GM12878 (cell line): ENCODE measurements at regions of chr3 and their contacts with region 1.

Region 1: GRCh38 chr3:100068826-100069225 is 45.5 kb downstream of the FILIP1L start:
- DNase-seq: peak; percentile 33
- ATAC-seq: peak; percentile 96
- H3K4me3 ChIP-seq: no peak overlapping the region
- H3K27ac ChIP-seq: no peak overlapping the region
- H3K4me1 ChIP-seq: peaks cover 16% of the 10 kb centered on the region
- H3K27me3 ChIP-seq: no peaks in the 10 kb centered on the region
- CTCF ChIP-seq: peak; percentile 74 to 79 (median 79)
- EP300 ChIP-seq: no peak
- POLR2A ChIP-seq: no peak
- RAD21 ChIP-seq: peak; percentile 92

Region 2: GRCh38 chr3:100103558-100104441 is 35.0 kb after region 1 on chr3:
- CTCF ChIA-PET with region 1: interaction called, 11 read pairs
- POLR2A ChIA-PET with region 1: no interaction called
- RAD21 ChIA-PET with region 1: interaction called, 4 read pairs
- SMC1A ChIA-PET with region 1: interaction called, 9 read pairs
- in situ Hi-C with region 1: no loop called
- intact Hi-C with region 1: no loop called
- DNase-seq: peak; percentile 56
- ATAC-seq: peak; percentile 96
- H3K4me3 ChIP-seq: peak overlapping the region; percentile 11; the same call in 1 of the 2 replicates
- H3K27ac ChIP-seq: peak overlapping the region; percentile 75
- H3K4me1 ChIP-seq: peaks cover 33% of the 10 kb centered on the region
- H3K27me3 ChIP-seq: no peaks in the 10 kb centered on the region
- CTCF ChIP-seq: no peak
- EP300 ChIP-seq: peak; percentile 54 to 67; a peak in 3 of 4 replicates
- POLR2A ChIP-seq: no peak
- RAD21 ChIP-seq: peak; percentile 10; the same call in 1 of the 2 replicates

Region 3: DNA sequence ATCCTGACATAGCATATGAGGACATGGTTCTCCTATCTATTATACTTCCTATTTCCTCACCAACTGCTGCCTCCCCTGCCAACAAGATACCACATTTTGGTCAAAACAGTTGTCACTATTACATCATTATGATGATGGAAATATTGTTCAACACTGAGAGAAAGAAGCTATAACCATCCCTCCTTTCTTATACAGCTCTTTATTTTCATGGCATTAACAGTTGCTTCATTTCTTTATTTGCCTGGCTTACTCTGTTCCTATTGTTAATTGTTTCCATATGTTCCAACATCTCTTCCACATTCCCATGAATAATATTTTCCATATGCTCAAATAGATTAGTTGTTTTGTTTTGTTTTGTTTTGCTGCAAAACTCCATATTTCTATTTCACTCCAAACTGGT is 86.3 kb after region 1 on chr3:
- CTCF ChIA-PET with region 1: no interaction called
- POLR2A ChIA-PET with region 1: no interaction called
- RAD21 ChIA-PET with region 1: no interaction called
- SMC1A ChIA-PET with region 1: no interaction called
- in situ Hi-C with region 1: no loop called
- intact Hi-C with region 1: no loop called
- DNase-seq: no peak
- ATAC-seq: no peak
- H3K4me3 ChIP-seq: no peak overlapping the region
- H3K27ac ChIP-seq: no peak overlapping the region
- H3K4me1 ChIP-seq: no peaks in the 10 kb centered on the region
- H3K27me3 ChIP-seq: no peaks in the 10 kb centered on the region
- CTCF ChIP-seq: no peak
- EP300 ChIP-seq: no peak
- POLR2A ChIP-seq: no peak
- RAD21 ChIP-seq: no peak